ENCODE measurements at regions of chr16 and their contacts with region 1.

Region 1: DNA sequence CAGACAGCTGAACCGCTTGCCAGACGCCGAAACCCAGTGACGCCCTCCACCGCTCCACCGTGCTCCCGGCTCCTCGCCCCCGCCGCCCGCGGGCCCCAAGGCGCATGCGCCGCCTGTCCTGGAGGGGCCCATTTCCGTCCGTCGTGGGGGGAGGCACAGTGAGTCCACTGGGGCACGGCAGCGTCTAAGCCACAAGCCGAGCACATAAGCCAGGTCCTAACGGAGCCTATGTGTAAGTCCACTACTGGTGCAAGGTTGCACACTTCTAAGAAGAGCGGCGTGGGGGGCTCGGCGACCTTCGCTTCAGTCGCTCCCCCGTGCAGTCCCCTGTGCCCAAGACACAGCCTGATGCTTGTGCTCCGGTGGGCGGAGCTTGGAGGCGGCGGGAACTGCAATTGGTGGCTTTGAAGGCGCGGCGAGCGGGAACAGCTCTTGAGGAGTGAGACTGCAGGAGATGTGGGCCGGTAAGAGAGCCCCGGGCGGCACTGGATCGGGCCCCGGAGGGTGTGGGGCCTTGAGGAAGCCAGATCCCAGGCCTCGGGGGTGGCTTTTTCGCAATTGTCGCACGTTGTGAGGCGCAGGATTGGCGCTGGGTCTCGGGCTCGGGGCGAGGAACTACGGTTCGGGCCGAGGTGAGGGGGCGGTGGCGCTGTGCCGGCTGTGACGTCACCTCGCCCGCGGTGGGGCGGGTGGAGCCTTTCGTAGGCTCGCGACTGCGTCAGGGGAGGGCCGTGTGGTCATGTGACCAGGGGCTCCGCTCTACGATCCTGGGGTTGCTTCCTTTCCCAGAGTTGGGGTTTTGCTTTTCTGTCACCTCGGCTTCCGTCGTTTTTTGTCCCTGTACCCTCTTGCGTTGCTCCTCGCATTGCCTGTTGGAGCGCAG is at the starts of genes CENPN and CMC2:
- DNase-seq: peak; percentile 98 to 100 (median 99)
- ATAC-seq: peak; percentile 89
- H3K4me3 ChIP-seq: peak within 1 kb of the TSS; percentile 83
- H3K4me3 Mint-ChIP-seq: peak within 1 kb of the TSS; percentile 83 to 100 (median 96)
- H3K27ac ChIP-seq: peak within 1 kb of the TSS; percentile 95
- H3K27ac Mint-ChIP-seq: peak within 1 kb of the TSS; percentile 97 to 100 (median 100)
- H3K4me1 ChIP-seq: peaks cover 20 to 21% of the 10 kb centered on the region in 2 donors
- H3K4me1 Mint-ChIP-seq: peaks cover 21 to 70% (median 40%) of the 10 kb centered on the region in 7 donors
- H3K27me3 ChIP-seq: no peaks in the 10 kb centered on the region
- H3K27me3 Mint-ChIP-seq: no peaks in the 10 kb centered on the region
- total RNA-seq, gene CENPN: 1.4 to 41.8 (median 6.9) TPM
- total RNA-seq, gene CMC2: 28.3 to 78.4 (median 40.8) TPM

Region 2: DNA sequence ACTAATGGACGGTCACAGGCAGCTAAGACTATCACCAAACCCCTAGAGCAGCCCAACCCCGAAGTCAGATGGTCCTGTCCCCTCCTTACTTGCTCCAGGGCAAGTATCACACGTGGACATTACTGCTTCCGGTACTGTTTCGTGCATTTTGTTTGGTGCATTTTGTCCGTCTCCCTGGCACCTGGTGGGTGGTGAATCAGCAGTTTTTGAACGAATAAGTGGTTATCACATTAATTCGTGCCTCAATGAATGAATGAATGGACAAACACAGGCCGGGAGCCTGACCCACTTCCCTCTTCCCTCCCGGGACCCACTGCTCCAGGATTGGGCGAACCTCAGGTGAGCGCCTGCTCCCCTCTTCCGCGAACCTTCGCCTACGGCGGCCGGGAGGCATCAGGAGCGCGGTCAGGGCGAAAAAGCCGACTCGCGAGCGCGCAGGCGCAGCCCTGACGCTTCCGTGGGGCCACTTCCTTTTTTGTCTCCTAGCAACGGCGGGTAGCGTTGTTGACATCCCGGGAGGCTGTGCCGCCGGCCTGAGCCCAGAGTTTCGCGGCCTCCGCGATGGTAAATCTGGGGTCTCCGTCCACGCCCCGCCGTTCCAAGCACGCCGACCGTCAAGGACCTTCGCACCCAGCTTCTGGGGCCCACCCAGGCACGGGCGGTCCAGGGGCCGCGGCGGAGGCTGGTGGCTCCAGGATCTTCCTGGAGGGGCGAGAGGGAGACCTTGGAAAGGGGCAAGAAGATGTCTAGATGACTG is 466.4 kb before region 1 on chr16 and contains the start of gene DYNLRB2:
- CTCF ChIA-PET with region 1: no interaction called
- POLR2A ChIA-PET with region 1: no interaction called
- intact Hi-C with region 1: loop called (anchors 2 kb)
- DNase-seq: peak; percentile 82 to 94 (median 93)
- ATAC-seq: peak; percentile 94
- H3K4me3 ChIP-seq: peak within 1 kb of the TSS; percentile 94
- H3K4me3 Mint-ChIP-seq: peak within 1 kb of the TSS; percentile 93 to 98 (median 96)
- H3K27ac ChIP-seq: peak within 1 kb of the TSS; percentile 77
- H3K27ac Mint-ChIP-seq: peak within 1 kb of the TSS; percentile 96 to 99 (median 97)
- H3K4me1 ChIP-seq: peaks cover 6 to 13% of the 10 kb centered on the region in 2 donors
- H3K4me1 Mint-ChIP-seq: peaks cover 16 to 33% (median 19%) of the 10 kb centered on the region in 7 donors
- H3K27me3 ChIP-seq: no peaks in the 10 kb centered on the region
- H3K27me3 Mint-ChIP-seq: peaks cover 0 to 9% (median 3%) of the 10 kb centered on the region in 5 donors
- total RNA-seq, gene DYNLRB2: 0.92 to 1.2 TPM in 2 of 5 experiments, not detected in the others

Region 3: GRCh38 chr16:80804056-80804450 is 203.0 kb before region 1 on chr16:
- CTCF ChIA-PET with region 1: no interaction called
- POLR2A ChIA-PET with region 1: no interaction called
- intact Hi-C with region 1: loop called (anchors 5 kb)
- DNase-seq: peak; percentile 26 to 69 (median 52)
- ATAC-seq: peak; percentile 69
- H3K4me3 ChIP-seq: no peak overlapping the region
- H3K4me3 Mint-ChIP-seq: peak overlapping the region; percentile 85 to 96 (median 94)
- H3K27ac ChIP-seq: no peak overlapping the region
- H3K27ac Mint-ChIP-seq: peak overlapping the region in 7 of 9 donors; percentile 46 to 98 (median 78)
- H3K4me1 ChIP-seq: peaks cover 0 to 10% of the 10 kb centered on the region in 2 donors
- H3K4me1 Mint-ChIP-seq: peaks cover 12 to 59% (median 18%) of the 10 kb centered on the region in 7 donors
- H3K27me3 ChIP-seq: no peaks in the 10 kb centered on the region
- H3K27me3 Mint-ChIP-seq: peaks cover 0 to 9% (median 0%) of the 10 kb centered on the region in 5 donors

Region 4: DNA sequence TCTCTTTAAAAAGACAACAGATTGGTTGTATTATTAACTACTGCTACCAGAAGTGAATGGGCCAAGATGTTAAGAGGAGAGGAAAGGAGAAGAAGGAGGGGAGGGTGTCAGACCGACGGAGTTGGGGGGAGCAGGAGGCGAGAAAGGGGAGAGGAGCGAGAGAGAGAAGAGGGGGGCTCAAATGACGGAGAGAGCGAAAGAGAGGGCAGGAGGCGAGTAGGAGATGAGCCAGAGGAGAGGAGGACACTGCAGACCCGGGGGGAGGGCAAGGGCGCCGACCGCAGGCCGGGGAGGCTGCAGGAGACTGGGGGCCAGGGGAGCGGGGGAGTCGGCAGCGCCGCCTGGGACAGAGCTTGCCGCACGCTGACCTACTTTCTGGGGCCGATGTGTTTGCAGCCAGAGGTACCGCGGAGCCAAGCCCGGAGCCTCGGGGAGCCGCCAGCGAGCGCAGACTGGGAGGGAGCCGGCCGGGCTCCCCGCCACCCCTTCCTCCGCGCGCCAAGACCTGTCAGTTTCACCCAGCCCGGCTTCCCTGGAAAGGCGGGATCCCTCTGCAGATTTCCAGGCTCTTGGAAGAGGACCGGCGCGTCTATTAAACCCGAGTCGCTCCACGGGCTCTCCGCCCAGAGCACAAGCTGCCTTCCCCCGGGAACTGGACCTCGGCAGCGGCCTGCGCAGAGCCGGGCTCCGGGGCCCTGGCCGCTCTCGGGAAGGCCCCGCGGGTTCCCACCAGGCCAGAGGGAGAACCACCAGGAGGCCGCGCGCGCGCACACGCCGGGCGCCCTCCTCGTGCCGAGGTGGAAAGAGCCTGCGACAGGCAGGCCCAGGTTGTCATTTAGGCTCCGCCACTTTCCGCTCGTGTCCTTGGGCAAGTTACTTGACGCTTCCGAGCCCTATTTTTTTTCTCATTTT is 75.0 kb before region 1 on chr16:
- CTCF ChIA-PET with region 1: no interaction called
- POLR2A ChIA-PET with region 1: no interaction called
- intact Hi-C with region 1: no loop called
- DNase-seq: peak in 1 of 9 donors; percentile 6
- ATAC-seq: no peak
- H3K4me3 ChIP-seq: peak overlapping the region; percentile 6
- H3K4me3 Mint-ChIP-seq: peak overlapping the region; percentile 58 to 84 (median 77)
- H3K27ac ChIP-seq: no peak overlapping the region
- H3K27ac Mint-ChIP-seq: no peak overlapping the region
- H3K4me1 ChIP-seq: no peaks in the 10 kb centered on the region
- H3K4me1 Mint-ChIP-seq: peaks cover 2 to 15% (median 8%) of the 10 kb centered on the region in 7 donors
- H3K27me3 ChIP-seq: no peaks in the 10 kb centered on the region
- H3K27me3 Mint-ChIP-seq: peaks cover 52 to 77% (median 64%) of the 10 kb centered on the region in 5 donors

Region 5: DNA sequence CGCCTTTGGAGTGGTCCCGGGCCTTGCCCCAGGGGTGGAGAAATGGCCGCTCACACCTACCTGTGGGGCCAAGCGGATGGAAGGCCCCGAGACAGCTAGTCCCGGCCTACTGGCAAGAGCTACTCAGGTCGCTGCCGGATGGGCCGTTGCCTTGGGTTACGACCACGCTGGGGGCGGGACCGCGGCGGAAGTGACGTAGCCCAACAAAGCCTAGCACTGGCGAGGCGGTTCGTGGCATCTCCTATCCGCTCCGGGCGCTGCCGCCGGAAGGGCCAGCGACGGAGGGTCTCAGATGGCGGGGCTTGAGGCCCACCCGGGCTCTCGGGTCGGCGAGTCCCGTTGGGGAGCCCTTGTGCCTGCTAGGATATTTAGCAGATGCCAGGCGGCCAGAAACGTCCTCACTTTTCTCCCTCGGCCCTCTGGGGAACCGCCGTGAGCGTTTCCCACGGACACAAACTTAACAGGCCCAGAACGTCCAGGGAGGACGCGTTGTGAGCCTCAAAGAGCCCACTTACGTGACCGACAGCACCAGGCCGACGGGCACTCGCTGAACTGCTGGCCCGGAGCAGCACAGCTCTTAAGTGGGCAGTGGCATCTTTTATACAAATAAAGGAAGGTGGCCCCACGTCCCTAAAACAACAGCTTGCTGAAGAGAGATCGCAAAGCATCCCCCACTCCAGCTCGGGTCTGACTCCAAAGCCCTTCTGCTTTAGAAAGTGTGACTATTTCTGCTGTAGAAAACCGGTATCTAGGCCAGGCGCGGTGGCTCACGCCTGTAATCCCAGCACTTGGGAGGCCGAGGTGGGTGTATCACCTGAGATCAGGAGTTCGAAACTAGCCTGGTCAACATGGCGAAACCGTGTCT is 70.3 kb after region 1 on chr16 and contains the start of gene C16orf46:
- CTCF ChIA-PET with region 1: no interaction called
- POLR2A ChIA-PET with region 1: interaction called, 20 read pairs
- intact Hi-C with region 1: loop called (anchors 1 kb)
- DNase-seq: peak; percentile 93 to 99 (median 97)
- ATAC-seq: peak; percentile 85
- H3K4me3 ChIP-seq: peak within 1 kb of the TSS; percentile 96
- H3K4me3 Mint-ChIP-seq: peak within 1 kb of the TSS in 2 of 10 donors; percentile 39 to 57
- H3K27ac ChIP-seq: peak within 1 kb of the TSS; percentile 89
- H3K27ac Mint-ChIP-seq: peak within 1 kb of the TSS in 2 of 9 donors; percentile 89 to 91
- H3K4me1 ChIP-seq: peaks cover 10 to 11% of the 10 kb centered on the region in 2 donors
- H3K4me1 Mint-ChIP-seq: peaks cover 0 to 4% (median 0%) of the 10 kb centered on the region in 7 donors
- H3K27me3 ChIP-seq: no peaks in the 10 kb centered on the region
- H3K27me3 Mint-ChIP-seq: peaks cover 0 to 10% (median 0%) of the 10 kb centered on the region in 5 donors
- total RNA-seq, gene C16orf46: 0.24 to 2.1 (median 0.70) TPM in 4 of 5 experiments, not detected in the other

Region 6: DNA sequence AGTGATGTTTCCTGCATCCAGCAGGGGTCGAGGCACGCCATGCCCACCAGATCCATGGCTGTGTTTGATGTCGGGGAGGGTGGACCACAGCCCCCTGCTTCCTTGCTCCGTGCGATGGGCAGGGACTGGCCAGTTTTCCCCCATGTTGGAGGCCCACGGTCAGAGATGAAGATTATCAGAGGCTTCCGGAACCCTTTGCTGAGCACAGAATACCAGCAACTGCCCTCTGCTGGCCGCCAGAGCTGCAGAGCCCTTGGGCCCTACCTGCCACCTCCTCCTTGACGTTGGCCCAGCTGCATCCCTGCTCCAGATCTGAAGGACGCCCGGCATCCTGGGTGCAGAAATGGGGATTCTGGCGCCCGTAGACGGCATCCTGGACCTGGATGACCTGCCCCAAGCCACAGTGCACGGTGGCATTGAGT is 207.7 kb after region 1 on chr16:
- CTCF ChIA-PET with region 1: no interaction called
- POLR2A ChIA-PET with region 1: no interaction called
- intact Hi-C with region 1: no loop called
- DNase-seq: no peak
- ATAC-seq: no peak
- H3K4me3 ChIP-seq: no peak overlapping the region
- H3K4me3 Mint-ChIP-seq: no peak overlapping the region
- H3K27ac ChIP-seq: no peak overlapping the region
- H3K27ac Mint-ChIP-seq: peak overlapping the region in 1 of 9 donors; percentile 17
- H3K4me1 ChIP-seq: no peaks in the 10 kb centered on the region
- H3K4me1 Mint-ChIP-seq: peaks cover 0 to 2% (median 0%) of the 10 kb centered on the region in 7 donors
- H3K27me3 ChIP-seq: no peaks in the 10 kb centered on the region
- H3K27me3 Mint-ChIP-seq: peaks cover 4 to 27% (median 12%) of the 10 kb centered on the region in 5 donors

Region 7: GRCh38 chr16:81444448-81445121 is 437.5 kb after region 1 on chr16 and contains the start of gene CMIP:
- CTCF ChIA-PET with region 1: no interaction called
- POLR2A ChIA-PET with region 1: interaction called, 3 read pairs
- intact Hi-C with region 1: loop called (anchors 2 kb)
- DNase-seq: peak; percentile 66 to 89 (median 79)
- ATAC-seq: peak; percentile 88
- H3K4me3 ChIP-seq: peak within 1 kb of the TSS; percentile 91
- H3K4me3 Mint-ChIP-seq: peak within 1 kb of the TSS; percentile 85 to 94 (median 90)
- H3K27ac ChIP-seq: peak within 1 kb of the TSS; percentile 77
- H3K27ac Mint-ChIP-seq: peak within 1 kb of the TSS; percentile 90 to 97 (median 94)
- H3K4me1 ChIP-seq: peaks cover 35 to 37% of the 10 kb centered on the region in 2 donors
- H3K4me1 Mint-ChIP-seq: peaks cover 26 to 54% (median 48%) of the 10 kb centered on the region in 7 donors
- H3K27me3 ChIP-seq: no peaks in the 10 kb centered on the region
- H3K27me3 Mint-ChIP-seq: peaks cover 0 to 41% (median 0%) of the 10 kb centered on the region in 5 donors
- total RNA-seq, gene CMIP: 28.9 to 75.4 (median 38.2) TPM

Region 8: DNA sequence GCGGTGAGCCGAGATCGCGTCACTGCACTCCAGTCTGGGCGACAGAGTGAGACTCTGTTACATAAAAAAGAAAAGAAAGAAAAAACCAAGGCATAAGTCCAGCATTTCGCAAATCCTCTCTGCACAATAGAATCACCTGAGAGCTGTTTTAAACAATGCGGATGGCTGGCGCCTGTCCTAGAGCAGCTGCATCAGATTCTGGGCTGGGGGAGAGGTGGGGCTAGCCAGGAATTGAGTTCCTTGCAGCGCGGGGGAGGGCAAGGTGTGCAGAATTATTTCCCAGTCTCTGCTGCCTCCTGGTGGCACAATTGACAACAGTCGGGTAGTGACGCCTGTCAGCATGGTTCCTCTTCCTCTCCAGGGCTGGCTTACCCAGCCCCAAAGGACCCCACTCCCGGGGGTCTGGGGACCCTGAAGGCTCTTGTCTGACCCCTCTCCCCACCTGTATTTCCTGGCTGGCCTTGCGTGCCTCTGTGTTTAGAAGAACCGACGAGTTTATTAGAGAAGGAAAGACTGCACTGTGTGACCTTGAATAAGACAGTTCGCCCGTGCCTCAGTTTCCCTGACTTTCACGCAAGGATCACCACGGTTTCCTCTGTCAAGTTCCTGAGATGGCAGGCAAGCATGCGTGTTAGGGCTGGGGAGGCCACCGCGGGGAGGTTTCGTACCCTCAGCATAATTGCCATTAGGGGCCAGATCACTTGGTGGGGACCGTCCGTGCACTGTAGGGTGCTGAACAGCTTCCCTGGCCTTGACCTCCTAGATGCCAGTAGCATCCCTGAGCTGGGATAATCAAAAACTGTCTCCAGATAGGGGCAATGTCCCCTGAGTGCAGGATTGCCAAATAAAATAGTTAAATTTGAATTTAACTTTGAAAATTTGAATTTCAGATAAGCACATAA is 731.1 kb after region 1 on chr16:
- CTCF ChIA-PET with region 1: no interaction called
- POLR2A ChIA-PET with region 1: interaction called, 3 read pairs
- intact Hi-C with region 1: loop called (anchors 1 to 10 kb)
- DNase-seq: peak; percentile 69 to 88 (median 83)
- ATAC-seq: peak; percentile 95
- H3K4me3 ChIP-seq: peak overlapping the region; percentile 28
- H3K4me3 Mint-ChIP-seq: peak overlapping the region; percentile 67 to 81 (median 76)
- H3K27ac ChIP-seq: no peak overlapping the region
- H3K27ac Mint-ChIP-seq: peak overlapping the region in 6 of 9 donors; percentile 34 to 75 (median 42)
- H3K4me1 ChIP-seq: peaks cover 0 to 3% of the 10 kb centered on the region in 2 donors
- H3K4me1 Mint-ChIP-seq: peaks cover 0 to 18% (median 5%) of the 10 kb centered on the region in 7 donors
- H3K27me3 ChIP-seq: no peaks in the 10 kb centered on the region
- H3K27me3 Mint-ChIP-seq: peaks cover 0 to 2% (median 0%) of the 10 kb centered on the region in 5 donors

Region 9: DNA sequence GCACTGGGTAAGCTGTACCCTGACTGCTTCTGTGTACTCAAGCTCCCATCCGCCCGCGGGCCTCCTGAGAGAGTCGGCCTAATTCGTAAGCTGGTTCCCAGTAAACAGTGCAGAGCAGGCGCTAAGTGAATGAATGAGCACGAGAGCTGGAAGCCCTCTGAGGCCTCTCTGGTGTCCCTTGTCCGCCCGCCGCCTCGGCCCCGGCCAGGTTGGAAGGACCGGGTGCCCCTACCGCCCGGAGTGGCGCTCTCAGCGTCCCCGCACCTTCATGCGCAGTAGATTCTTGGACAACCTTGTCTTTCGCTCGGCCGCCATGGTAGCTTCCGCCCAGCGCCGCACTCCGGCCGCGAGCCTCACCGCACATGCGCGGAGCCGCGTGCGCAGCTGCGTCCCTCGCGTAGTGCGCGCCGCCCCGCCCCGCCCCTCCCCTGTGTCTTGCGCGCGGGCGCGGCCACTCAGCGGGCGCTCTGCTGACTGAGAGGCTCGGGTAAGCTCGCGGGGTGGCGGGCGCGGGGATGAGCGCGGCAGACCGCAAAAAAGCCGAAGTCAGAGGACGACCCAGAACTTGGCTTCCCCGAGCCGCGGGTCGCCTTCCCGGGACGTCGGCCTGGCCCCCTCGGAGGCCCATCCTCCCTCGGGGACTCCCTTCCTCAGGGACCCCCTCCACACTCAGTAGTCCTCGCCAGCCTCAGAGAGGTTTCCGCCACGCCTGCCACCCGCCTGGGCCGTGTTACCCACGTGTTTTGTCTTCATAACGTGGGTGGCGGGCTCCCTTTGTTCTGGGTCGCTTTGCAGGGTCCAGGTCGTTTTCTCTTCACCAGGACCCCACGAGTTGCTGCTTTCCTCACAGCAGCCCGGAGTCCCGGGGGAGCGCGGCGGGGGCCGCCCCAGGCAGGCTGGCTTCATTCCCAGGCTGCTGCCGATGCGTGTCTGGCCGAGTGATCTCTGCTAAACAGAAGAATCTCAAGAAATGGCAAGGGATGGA is 1163.1 kb after region 1 on chr16 and contains the start of gene MPHOSPH6:
- CTCF ChIA-PET with region 1: no interaction called
- POLR2A ChIA-PET with region 1: no interaction called
- intact Hi-C with region 1: loop called (anchors 1 to 5 kb)
- DNase-seq: peak; percentile 84 to 91 (median 88)
- ATAC-seq: peak; percentile 98
- H3K4me3 ChIP-seq: peak within 1 kb of the TSS; percentile 77
- H3K4me3 Mint-ChIP-seq: peak within 1 kb of the TSS; percentile 80 to 97 (median 95)
- H3K27ac ChIP-seq: peak within 1 kb of the TSS; percentile 84
- H3K27ac Mint-ChIP-seq: peak within 1 kb of the TSS; percentile 78 to 98 (median 96)
- H3K4me1 ChIP-seq: peaks cover 9 to 12% of the 10 kb centered on the region in 2 donors
- H3K4me1 Mint-ChIP-seq: peaks cover 18 to 38% (median 32%) of the 10 kb centered on the region in 7 donors
- H3K27me3 ChIP-seq: peaks cover 6% of the 10 kb centered on the region in 2 donors
- H3K27me3 Mint-ChIP-seq: peaks cover 8 to 41% (median 28%) of the 10 kb centered on the region in 5 donors
- total RNA-seq, gene MPHOSPH6: 15.6 to 30.4 (median 23.3) TPM